MCF 10A (cell line): ENCODE measurements at regions of chr4 and their contacts with region 1.

Region 1: GRCh38 chr4:53929955-53930798 is 134.2 kb downstream of the CHIC2 start:
- DNase-seq: peak; percentile 83
- H3K4me3 Mint-ChIP-seq: no peak overlapping the region
- H3K27ac Mint-ChIP-seq: no peak overlapping the region
- H3K4me1 Mint-ChIP-seq: peaks cover 14% of the 10 kb centered on the region
- H3K27me3 Mint-ChIP-seq: no peaks in the 10 kb centered on the region
- CTCF ChIP-seq: peak; percentile 71

Region 2: DNA sequence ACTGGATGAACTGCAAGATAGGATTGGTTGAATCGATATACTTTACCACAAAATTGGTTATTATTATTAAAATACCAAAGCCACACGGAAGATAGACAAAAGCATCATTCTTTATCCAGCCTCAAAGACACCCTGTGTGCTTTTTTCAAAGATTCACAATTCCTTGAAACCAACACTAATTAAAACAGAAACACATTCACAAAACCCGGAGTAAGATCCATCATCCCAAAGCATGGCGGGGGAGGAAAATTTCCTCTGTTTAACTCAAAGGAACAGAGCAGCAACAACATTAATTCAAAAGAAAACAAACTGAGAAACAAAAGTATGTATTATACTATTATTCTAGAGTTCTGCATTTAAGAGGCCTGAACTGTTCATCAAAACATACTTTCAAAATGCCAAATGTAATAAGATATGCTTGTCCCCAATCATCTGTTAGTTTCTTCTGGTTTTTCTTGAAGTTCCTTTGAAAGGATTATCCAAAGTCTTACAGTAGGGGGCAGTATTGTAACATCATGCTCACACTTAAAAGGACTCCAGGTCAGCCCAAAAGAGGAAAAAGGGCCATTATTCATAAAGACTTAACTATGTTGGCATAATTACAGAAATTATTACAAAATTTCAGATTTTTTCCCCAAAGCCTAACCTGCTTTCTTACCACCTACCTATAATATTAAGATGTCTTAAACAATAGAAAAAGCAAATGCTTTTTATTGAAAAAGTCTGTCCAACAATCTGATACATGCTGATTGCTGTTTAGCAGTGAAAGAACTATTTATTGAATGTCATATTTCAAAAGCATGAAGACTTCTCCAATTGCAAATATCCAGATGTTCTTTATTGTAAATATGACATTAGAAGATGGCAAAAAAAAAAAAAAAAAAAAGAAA is 733.0 kb before region 1 on chr4:
- CTCF ChIA-PET with region 1: interaction called, 6 read pairs
- POLR2A ChIA-PET with region 1: no interaction called
- intact Hi-C with region 1: loop called (anchors 5 kb)
- DNase-seq: peak; percentile 79
- H3K4me3 Mint-ChIP-seq: no peak overlapping the region
- H3K27ac Mint-ChIP-seq: no peak overlapping the region
- H3K4me1 Mint-ChIP-seq: no peaks in the 10 kb centered on the region
- H3K27me3 Mint-ChIP-seq: no peaks in the 10 kb centered on the region
- CTCF ChIP-seq: peak; percentile 78

Region 3: GRCh38 chr4:53800741-53801140 is 129.4 kb before region 1 on chr4:
- CTCF ChIA-PET with region 1: no interaction called
- POLR2A ChIA-PET with region 1: no interaction called
- intact Hi-C with region 1: no loop called
- DNase-seq: no peak
- H3K4me3 Mint-ChIP-seq: no peak overlapping the region
- H3K27ac Mint-ChIP-seq: no peak overlapping the region
- H3K4me1 Mint-ChIP-seq: no peaks in the 10 kb centered on the region
- H3K27me3 Mint-ChIP-seq: no peaks in the 10 kb centered on the region
- CTCF ChIP-seq: no peak

Region 4: GRCh38 chr4:53920116-53920515 is 10.1 kb before region 1 on chr4:
- CTCF ChIA-PET with region 1: interaction called, 45 read pairs
- POLR2A ChIA-PET with region 1: interaction called, 6 read pairs
- intact Hi-C with region 1: no loop called
- DNase-seq: no peak
- H3K4me3 Mint-ChIP-seq: no peak overlapping the region
- H3K27ac Mint-ChIP-seq: no peak overlapping the region
- H3K4me1 Mint-ChIP-seq: peaks cover 45% of the 10 kb centered on the region
- H3K27me3 Mint-ChIP-seq: no peaks in the 10 kb centered on the region
- CTCF ChIP-seq: no peak

Region 5: GRCh38 chr4:53951414-53951813 is 21.2 kb after region 1 on chr4:
- CTCF ChIA-PET with region 1: no interaction called
- POLR2A ChIA-PET with region 1: no interaction called
- intact Hi-C with region 1: no loop called
- DNase-seq: no peak
- H3K4me3 Mint-ChIP-seq: no peak overlapping the region
- H3K27ac Mint-ChIP-seq: no peak overlapping the region
- H3K4me1 Mint-ChIP-seq: no peaks in the 10 kb centered on the region
- H3K27me3 Mint-ChIP-seq: no peaks in the 10 kb centered on the region
- CTCF ChIP-seq: no peak

Region 6: GRCh38 chr4:54058171-54058570 is 128.0 kb after region 1 on chr4:
- CTCF ChIA-PET with region 1: interaction called, 15 read pairs
- POLR2A ChIA-PET with region 1: interaction called, 15 read pairs
- intact Hi-C with region 1: loop called (anchors 5 kb)
- DNase-seq: no peak
- H3K4me3 Mint-ChIP-seq: no peak overlapping the region
- H3K27ac Mint-ChIP-seq: no peak overlapping the region
- H3K4me1 Mint-ChIP-seq: peaks cover 51% of the 10 kb centered on the region
- H3K27me3 Mint-ChIP-seq: no peaks in the 10 kb centered on the region
- CTCF ChIP-seq: no peak

Region 7: DNA sequence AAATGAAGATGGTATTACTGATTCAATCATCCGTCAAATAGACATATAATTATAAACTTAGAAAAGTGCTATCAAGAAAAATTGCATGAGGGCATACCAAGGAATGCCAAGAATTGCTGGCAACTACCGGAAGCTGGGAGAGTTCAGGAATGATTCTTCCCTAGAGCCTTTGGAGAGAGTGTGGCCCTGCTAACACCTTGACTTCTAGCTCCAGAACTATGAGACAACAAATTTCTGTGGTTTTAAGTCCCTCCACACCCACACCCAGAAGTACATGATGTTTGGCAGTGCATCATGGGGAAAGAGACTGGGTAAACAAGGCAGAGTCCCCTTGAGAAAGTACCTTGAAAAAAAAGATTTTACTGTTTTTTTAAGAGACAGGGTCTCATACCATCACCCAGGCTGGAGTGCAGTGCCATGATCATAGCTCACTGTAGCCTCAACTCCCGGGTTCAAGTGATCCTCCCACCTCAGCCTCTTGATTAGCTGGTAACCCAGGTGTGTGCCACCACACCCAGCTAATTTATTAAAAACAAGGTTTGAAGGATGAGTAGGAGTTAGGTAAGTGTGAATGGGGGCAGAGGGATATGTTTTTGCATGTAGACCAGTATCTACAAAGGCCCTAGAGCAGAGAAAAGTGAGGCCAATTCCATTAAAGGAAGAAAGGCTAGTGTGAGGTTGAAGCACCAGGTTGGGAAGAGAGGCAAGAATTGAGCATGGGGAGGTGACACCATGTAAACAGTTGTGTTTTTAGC is 222.8 kb after region 1 on chr4:
- CTCF ChIA-PET with region 1: interaction called, 7 read pairs
- POLR2A ChIA-PET with region 1: no interaction called
- intact Hi-C with region 1: loop called (anchors 5 kb)
- DNase-seq: peak; percentile 42
- H3K4me3 Mint-ChIP-seq: peak overlapping the region; percentile 17
- H3K27ac Mint-ChIP-seq: peak overlapping the region; percentile 98
- H3K4me1 Mint-ChIP-seq: peaks cover 30% of the 10 kb centered on the region
- H3K27me3 Mint-ChIP-seq: no peaks in the 10 kb centered on the region
- CTCF ChIP-seq: no peak

Region 8: GRCh38 chr4:54217642-54218495 is 287.7 kb after region 1 on chr4:
- CTCF ChIA-PET with region 1: interaction called, 215 read pairs
- POLR2A ChIA-PET with region 1: interaction called, 4 read pairs
- intact Hi-C with region 1: loop called (anchors 1 kb)
- DNase-seq: peak; percentile 91
- H3K4me3 Mint-ChIP-seq: peak overlapping the region; percentile 40
- H3K27ac Mint-ChIP-seq: no peak overlapping the region
- H3K4me1 Mint-ChIP-seq: peaks cover 14% of the 10 kb centered on the region
- H3K27me3 Mint-ChIP-seq: no peaks in the 10 kb centered on the region
- CTCF ChIP-seq: peak; percentile 77